Left ventricle myocardium inferior (tissue), 1 donor: ENCODE measurements at regions of chr6 and their contacts with region 1.

Region 1: GRCh38 chr6:87154993-87155841 is at the start of gene ZNF292:
- DNase-seq: peak; percentile 95
- H3K4me3 ChIP-seq: peak within 1 kb of the TSS; percentile 82
- H3K27ac ChIP-seq: peak within 1 kb of the TSS; percentile 95
- H3K4me1 ChIP-seq: peaks cover 86% of the 10 kb centered on the region
- H3K27me3 ChIP-seq: no peaks in the 10 kb centered on the region
- CTCF ChIP-seq: peak; percentile 6
- total RNA-seq, gene ZNF292: 28.2 TPM

Region 2: DNA sequence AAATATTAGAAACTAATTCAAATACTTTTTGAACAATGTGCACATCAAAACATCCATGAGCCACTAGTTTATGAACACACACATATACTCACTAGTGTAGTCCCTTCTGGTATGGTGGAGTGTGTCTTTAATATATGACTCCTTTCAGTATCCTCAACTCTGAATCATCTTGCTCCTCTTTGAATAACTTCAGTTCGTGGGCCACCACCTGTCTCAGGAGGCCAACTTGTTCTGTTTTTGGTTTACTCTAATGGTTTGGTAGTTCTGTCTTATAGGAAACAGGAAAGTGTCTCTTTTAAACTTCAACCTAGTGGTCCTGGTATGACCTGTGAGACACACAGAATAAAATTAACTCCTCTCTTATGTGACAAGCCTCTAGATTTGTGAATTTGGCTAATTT is 55.8 kb after region 1 on chr6:
- intact Hi-C with region 1: loop called (anchors 10 kb)
- DNase-seq: no peak
- H3K4me3 ChIP-seq: no peak overlapping the region
- H3K27ac ChIP-seq: no peak overlapping the region
- H3K4me1 ChIP-seq: peaks cover 78% of the 10 kb centered on the region
- H3K27me3 ChIP-seq: no peaks in the 10 kb centered on the region
- CTCF ChIP-seq: no peak

Region 3: GRCh38 chr6:87244380-87244779 is 89.2 kb after region 1 on chr6:
- intact Hi-C with region 1: no loop called
- DNase-seq: no peak
- H3K4me3 ChIP-seq: no peak overlapping the region
- H3K27ac ChIP-seq: no peak overlapping the region
- H3K4me1 ChIP-seq: no peaks in the 10 kb centered on the region
- H3K27me3 ChIP-seq: no peaks in the 10 kb centered on the region
- CTCF ChIP-seq: no peak